Activated naive CD4-positive, alpha-beta T cell treated with anti-CD3 and anti-CD28 coated beads for 36 hours (primary cell): ENCODE measurements at regions of chr6 and their contacts with region 1.

Region 1: GRCh38 chr6:14108571-14109410 is 8.8 kb upstream of the CD83 start:
- DNase-seq: peak; percentile 52
- H3K4me3 Mint-ChIP-seq: peak overlapping the region; percentile 30
- H3K27ac Mint-ChIP-seq: peak overlapping the region; percentile 78
- H3K4me1 Mint-ChIP-seq: peaks cover 31% of the 10 kb centered on the region
- H3K27me3 Mint-ChIP-seq: peaks cover 3% of the 10 kb centered on the region

Region 2: GRCh38 chr6:13194852-13195251 is 913.9 kb before region 1 on chr6:
- CTCF ChIA-PET with region 1: no interaction called
- intact Hi-C with region 1: no loop called
- DNase-seq: peak; percentile 49
- H3K4me3 Mint-ChIP-seq: no peak overlapping the region
- H3K27ac Mint-ChIP-seq: no peak overlapping the region
- H3K4me1 Mint-ChIP-seq: no peaks in the 10 kb centered on the region
- H3K27me3 Mint-ChIP-seq: peaks cover 9% of the 10 kb centered on the region

Region 3: DNA sequence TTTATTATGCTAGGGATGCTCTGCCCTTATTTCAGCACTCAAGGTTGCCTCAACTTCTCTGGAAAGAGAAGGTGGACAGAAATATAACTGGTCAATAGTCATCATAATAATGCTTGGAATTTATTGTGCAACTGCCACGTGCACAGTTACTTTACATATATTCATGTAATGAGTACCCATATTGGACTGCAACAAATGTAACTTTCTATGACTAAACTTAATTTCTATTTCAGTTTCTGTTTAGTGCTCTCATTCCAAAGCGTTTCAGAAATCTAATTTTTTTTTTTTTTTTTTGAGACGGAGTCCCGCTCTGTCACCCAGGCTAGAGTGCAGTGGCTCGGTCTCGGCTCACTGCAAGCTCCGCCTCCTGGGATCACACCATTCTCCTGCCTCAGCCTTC is 19.6 kb before region 1 on chr6:
- CTCF ChIA-PET with region 1: no interaction called
- intact Hi-C with region 1: loop called (anchors 2 kb)
- DNase-seq: no peak
- H3K4me3 Mint-ChIP-seq: no peak overlapping the region
- H3K27ac Mint-ChIP-seq: no peak overlapping the region
- H3K4me1 Mint-ChIP-seq: peaks cover 16% of the 10 kb centered on the region
- H3K27me3 Mint-ChIP-seq: peaks cover 4% of the 10 kb centered on the region